ENCODE measurements at regions of chr11 and their contacts with region 1.

Region 1: GRCh38 chr11:9314291-9315036 is at the start of gene TMEM41B:
- DNase-seq: peak; percentile 97 to 100 (median 99)
- ATAC-seq: peak; percentile 93
- H3K4me3 ChIP-seq: peak within 1 kb of the TSS; percentile 86
- H3K4me3 Mint-ChIP-seq: peak within 1 kb of the TSS; percentile 97
- H3K27ac ChIP-seq: peak within 1 kb of the TSS; percentile 88 to 92
- H3K27ac Mint-ChIP-seq: peak within 1 kb of the TSS; percentile 96
- H3K4me1 ChIP-seq: peaks cover 22% of the 10 kb centered on the region
- H3K4me1 Mint-ChIP-seq: peaks cover 49% of the 10 kb centered on the region
- H3K27me3 ChIP-seq: no peaks in the 10 kb centered on the region
- H3K27me3 Mint-ChIP-seq: peaks cover 19% of the 10 kb centered on the region
- CTCF ChIP-seq: no peak
- total RNA-seq, gene TMEM41B: 41.4 to 42.7 TPM

Region 2: DNA sequence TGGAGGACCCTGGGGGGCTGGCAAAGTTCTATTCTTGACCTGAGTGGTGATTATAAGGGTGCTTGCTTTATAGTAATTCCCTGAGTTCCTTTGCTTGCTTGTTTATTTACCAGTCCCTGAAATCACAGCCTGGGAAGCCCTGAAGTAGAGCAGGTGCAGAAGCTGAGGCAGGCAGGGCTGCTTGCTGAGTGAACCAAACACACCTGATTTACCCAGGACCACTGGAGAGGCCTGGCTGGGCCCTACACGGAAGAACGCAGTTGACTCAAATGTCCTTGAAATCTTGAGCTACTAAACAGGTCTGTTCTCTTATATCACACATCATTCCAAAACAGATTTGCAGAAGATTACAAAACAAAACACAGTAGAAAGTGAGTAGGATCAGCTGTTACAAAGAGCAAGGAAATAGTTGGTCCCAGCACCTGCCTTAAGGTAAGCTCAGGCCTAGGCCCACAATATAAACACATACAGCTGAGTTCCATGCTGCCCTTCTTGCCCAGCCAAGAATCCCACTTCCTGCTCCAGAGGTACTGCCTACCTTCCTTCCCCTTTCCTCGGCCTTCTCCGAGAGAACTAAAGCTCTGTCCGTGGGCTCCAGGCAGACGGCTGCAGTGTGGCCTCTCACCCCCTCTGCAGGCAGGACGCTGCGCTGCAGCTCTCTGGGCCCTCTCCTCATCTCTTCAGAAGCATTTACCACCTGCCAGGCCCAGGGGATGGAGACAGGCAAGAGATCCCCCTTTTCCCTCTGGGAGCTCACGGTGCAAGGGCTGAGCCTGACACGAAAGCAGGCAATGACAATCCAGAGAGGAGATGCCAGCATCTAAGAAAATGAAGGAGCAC is 177.0 kb before region 1 on chr11:
- CTCF ChIA-PET with region 1: no interaction called
- POLR2A ChIA-PET with region 1: no interaction called
- intact Hi-C with region 1: no loop called
- DNase-seq: peak; percentile 36 to 78 (median 62)
- ATAC-seq: peak; percentile 94
- H3K4me3 ChIP-seq: no peak overlapping the region
- H3K4me3 Mint-ChIP-seq: peak overlapping the region; percentile 0
- H3K27ac ChIP-seq: no peak overlapping the region
- H3K27ac Mint-ChIP-seq: peak overlapping the region; percentile 28
- H3K4me1 ChIP-seq: peaks cover 20% of the 10 kb centered on the region
- H3K4me1 Mint-ChIP-seq: peaks cover 15% of the 10 kb centered on the region
- H3K27me3 ChIP-seq: no peaks in the 10 kb centered on the region
- H3K27me3 Mint-ChIP-seq: no peaks in the 10 kb centered on the region
- CTCF ChIP-seq: peak; percentile 96

Region 3: DNA sequence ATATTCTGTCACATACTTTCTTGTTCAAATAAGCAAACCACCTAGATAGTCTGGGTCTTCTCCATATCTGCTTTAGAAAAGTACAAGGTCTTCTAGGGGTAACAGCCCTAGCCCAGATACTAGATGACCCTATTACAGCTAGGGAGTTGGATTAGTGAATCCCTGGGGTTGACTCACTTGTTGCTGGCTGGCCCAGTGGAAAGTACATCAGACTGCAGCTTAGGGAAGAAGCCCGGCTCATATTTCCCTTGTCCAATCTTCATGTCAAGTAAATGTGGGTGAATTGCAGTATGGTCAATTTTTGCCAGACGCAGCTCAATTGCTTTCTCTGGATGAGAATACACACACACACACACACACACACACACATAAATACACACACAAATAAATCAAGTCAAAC is 144.0 kb before region 1 on chr11:
- CTCF ChIA-PET with region 1: no interaction called
- POLR2A ChIA-PET with region 1: no interaction called
- intact Hi-C with region 1: loop called in 1 of 2 experiments (anchors 1 kb)
- DNase-seq: no peak
- ATAC-seq: no peak
- H3K4me3 ChIP-seq: no peak overlapping the region
- H3K4me3 Mint-ChIP-seq: no peak overlapping the region
- H3K27ac ChIP-seq: no peak overlapping the region
- H3K27ac Mint-ChIP-seq: no peak overlapping the region
- H3K4me1 ChIP-seq: no peaks in the 10 kb centered on the region
- H3K4me1 Mint-ChIP-seq: peaks cover 13% of the 10 kb centered on the region
- H3K27me3 ChIP-seq: no peaks in the 10 kb centered on the region
- H3K27me3 Mint-ChIP-seq: no peaks in the 10 kb centered on the region
- CTCF ChIP-seq: no peak

Region 4: DNA sequence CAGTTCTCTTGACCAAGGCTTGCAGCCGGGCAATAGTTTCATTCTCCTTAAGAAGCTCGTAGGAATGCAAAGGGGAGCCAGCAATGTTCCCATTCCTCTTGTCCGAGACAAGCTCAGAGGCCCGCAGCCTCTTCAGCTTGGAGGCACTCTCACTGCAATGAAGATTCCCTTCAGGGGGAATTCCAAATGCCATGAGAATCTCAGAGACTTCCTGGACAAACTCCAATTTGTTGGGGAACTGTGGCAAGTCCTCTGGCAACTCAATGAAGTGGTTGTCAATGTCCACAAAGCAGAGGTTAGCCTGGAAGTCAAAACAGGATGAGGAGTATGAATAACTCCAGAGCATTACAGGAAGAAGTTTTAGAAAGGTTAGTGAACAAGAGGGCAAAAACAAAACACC is 133.7 kb before region 1 on chr11:
- CTCF ChIA-PET with region 1: no interaction called
- POLR2A ChIA-PET with region 1: no interaction called
- intact Hi-C with region 1: no loop called
- DNase-seq: no peak
- ATAC-seq: no peak
- H3K4me3 ChIP-seq: no peak overlapping the region
- H3K4me3 Mint-ChIP-seq: no peak overlapping the region
- H3K27ac ChIP-seq: no peak overlapping the region
- H3K27ac Mint-ChIP-seq: peak overlapping the region; percentile 56
- H3K4me1 ChIP-seq: no peaks in the 10 kb centered on the region
- H3K4me1 Mint-ChIP-seq: peaks cover 7% of the 10 kb centered on the region
- H3K27me3 ChIP-seq: no peaks in the 10 kb centered on the region
- H3K27me3 Mint-ChIP-seq: no peaks in the 10 kb centered on the region
- CTCF ChIP-seq: no peak

Region 5: GRCh38 chr11:9265211-9266131 is 49.0 kb before region 1 on chr11 and contains the start of gene DENND5A:
- CTCF ChIA-PET with region 1: no interaction called
- POLR2A ChIA-PET with region 1: interaction called, 26 read pairs
- intact Hi-C with region 1: loop called in 1 of 2 experiments (anchors 5 kb)
- DNase-seq: peak; percentile 18 to 82 (median 50)
- ATAC-seq: peak; percentile 52
- H3K4me3 ChIP-seq: peak within 1 kb of the TSS; percentile 91
- H3K4me3 Mint-ChIP-seq: peak within 1 kb of the TSS; percentile 98
- H3K27ac ChIP-seq: peak within 1 kb of the TSS; percentile 77
- H3K27ac Mint-ChIP-seq: peak within 1 kb of the TSS; percentile 95
- H3K4me1 ChIP-seq: peaks cover 32% of the 10 kb centered on the region
- H3K4me1 Mint-ChIP-seq: peaks cover 35% of the 10 kb centered on the region
- H3K27me3 ChIP-seq: no peaks in the 10 kb centered on the region
- H3K27me3 Mint-ChIP-seq: no peaks in the 10 kb centered on the region
- CTCF ChIP-seq: no peak
- total RNA-seq, gene DENND5A: 101 to 103 TPM

Region 6: GRCh38 chr11:9293646-9294045 is 20.8 kb before region 1 on chr11:
- CTCF ChIA-PET with region 1: no interaction called
- POLR2A ChIA-PET with region 1: no interaction called
- intact Hi-C with region 1: no loop called
- DNase-seq: no peak
- ATAC-seq: no peak
- H3K4me3 ChIP-seq: no peak overlapping the region
- H3K4me3 Mint-ChIP-seq: no peak overlapping the region
- H3K27ac ChIP-seq: no peak overlapping the region
- H3K27ac Mint-ChIP-seq: no peak overlapping the region
- H3K4me1 ChIP-seq: no peaks in the 10 kb centered on the region
- H3K4me1 Mint-ChIP-seq: peaks cover 5% of the 10 kb centered on the region
- H3K27me3 ChIP-seq: no peaks in the 10 kb centered on the region
- H3K27me3 Mint-ChIP-seq: no peaks in the 10 kb centered on the region
- CTCF ChIP-seq: no peak

Region 7: DNA sequence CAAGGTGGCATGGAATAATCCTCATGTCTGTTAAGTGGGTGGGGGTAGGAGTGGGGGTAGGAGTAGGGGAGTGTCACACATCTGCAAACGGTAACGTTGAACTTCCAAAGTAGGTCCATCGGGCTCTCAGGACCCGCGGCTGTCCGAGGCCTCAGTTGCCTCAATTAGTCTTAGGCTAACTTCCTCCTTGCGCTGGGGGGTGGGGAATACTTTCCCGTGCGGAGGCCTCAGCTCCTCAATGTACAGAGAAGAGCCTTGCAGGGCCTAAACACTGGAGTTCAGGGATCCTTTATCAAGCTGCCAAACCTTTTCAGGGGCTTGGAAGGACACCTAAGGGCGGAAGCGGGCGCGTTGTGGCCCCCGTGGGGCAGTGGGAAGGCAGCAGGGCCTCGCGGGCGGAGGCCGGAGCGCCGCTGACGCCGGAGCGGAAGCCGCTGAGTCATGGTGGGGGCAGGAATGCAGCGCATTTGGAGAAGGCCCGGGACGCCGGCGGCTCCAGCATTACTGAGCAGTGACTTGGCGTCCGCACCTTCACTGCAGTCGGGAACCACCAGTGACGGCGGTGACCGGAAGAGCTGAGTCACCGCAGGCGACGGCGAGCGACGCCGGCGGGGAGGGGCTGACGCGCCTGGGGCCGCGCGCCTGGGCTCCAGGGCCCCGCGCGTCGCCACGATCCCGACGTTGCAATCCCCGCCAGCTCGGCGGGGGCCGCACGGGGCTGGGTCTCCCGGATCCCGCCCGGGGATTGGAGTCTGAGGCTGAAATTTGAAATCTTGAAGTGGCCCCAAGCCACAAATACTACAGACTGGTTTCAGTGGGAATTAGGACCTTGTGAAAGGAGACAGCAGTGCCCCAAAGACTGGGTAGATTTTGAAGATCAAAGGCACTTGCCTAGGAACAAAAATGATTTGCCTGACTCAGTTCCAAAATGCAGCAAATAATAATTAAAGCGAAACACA is 49.8 kb after region 1 on chr11:
- CTCF ChIA-PET with region 1: interaction called, 3 read pairs
- POLR2A ChIA-PET with region 1: interaction called, 11 read pairs
- intact Hi-C with region 1: loop called (anchors 5 kb)
- DNase-seq: peak; percentile 45 to 94 (median 66)
- ATAC-seq: peak; percentile 91
- H3K4me3 ChIP-seq: peak overlapping the region; percentile 65
- H3K4me3 Mint-ChIP-seq: peak overlapping the region; percentile 89
- H3K27ac ChIP-seq: peak overlapping the region; percentile 55 to 92
- H3K27ac Mint-ChIP-seq: peak overlapping the region; percentile 88
- H3K4me1 ChIP-seq: peaks cover 17% of the 10 kb centered on the region
- H3K4me1 Mint-ChIP-seq: peaks cover 16% of the 10 kb centered on the region
- H3K27me3 ChIP-seq: no peaks in the 10 kb centered on the region
- H3K27me3 Mint-ChIP-seq: no peaks in the 10 kb centered on the region
- CTCF ChIP-seq: no peak

Measured in CD4-positive, alpha-beta T cell (primary cell).